ENCODE measurements at regions of chr5 and their contacts with region 1.

Region 1: DNA sequence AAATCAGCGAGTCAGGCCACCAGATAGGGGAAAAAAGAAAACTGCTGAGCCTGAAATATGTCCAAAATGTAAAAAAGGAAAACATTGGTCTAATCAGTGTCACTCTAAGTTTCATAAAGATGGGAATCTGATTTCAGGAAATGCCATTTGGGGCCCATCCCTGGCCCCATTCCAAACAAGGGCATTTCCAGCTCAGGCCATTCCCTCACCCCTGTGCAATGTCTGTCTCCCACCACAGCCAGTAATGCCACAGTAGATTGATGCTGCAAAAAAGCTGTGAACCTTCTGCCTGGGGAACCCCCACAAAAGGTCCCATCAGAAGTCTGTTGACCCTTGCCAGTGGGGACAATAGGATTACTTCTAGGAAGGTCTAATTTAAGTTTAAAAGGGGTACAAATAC is 199.6 kb downstream of the YTHDC2 start:
- DNase-seq: no peak
- H3K4me3 ChIP-seq: no peak overlapping the region
- H3K27ac ChIP-seq: no peak overlapping the region
- H3K4me1 ChIP-seq: no peaks in the 10 kb centered on the region
- H3K27me3 ChIP-seq: no peaks in the 10 kb centered on the region
- CTCF ChIP-seq: no peak
- POLR2A ChIP-seq: no peak

Region 2: DNA sequence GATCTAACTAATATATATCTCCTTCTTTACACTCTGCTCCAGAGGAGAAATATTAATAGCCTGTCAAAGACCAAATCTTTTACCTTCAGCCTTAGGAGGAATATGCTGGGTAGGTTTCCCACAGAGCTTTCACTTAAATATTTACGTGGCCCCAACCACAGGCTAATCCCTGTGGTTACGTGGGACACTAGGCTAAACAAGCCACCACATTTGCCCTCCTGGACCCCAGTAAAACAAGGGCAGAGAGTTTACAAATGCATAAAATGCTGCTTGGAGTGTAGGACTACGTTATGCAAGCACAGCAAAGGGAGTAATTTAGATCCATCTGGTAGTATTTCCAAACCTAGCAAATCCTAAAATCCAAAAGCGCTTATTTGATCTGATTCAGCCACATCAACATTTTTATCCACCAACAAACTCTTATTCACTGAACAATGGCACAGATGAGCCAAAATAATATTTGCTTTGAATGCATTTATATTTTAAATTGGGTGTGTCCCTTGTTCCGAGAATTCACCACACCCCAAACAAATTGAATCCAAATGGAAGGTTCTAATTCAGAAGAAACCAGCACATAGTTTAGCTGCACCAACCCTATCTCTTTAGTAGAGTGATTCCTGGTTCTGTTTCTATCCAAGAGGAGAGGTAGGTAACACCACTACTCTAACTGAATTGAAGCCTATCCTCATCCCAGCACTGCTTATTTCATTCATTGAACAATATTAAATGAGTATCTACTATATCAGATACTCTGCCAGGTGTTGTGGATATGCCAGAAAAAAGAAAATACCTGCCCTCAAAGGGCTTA is 457.3 kb before region 1 on chr5:
- intact Hi-C with region 1: loop called (anchors 5 kb)
- DNase-seq: no peak
- H3K4me3 ChIP-seq: no peak overlapping the region
- H3K27ac ChIP-seq: peak overlapping the region; percentile 64
- H3K4me1 ChIP-seq: peaks cover 34% of the 10 kb centered on the region
- H3K27me3 ChIP-seq: no peaks in the 10 kb centered on the region
- CTCF ChIP-seq: no peak
- POLR2A ChIP-seq: no peak

Region 3: DNA sequence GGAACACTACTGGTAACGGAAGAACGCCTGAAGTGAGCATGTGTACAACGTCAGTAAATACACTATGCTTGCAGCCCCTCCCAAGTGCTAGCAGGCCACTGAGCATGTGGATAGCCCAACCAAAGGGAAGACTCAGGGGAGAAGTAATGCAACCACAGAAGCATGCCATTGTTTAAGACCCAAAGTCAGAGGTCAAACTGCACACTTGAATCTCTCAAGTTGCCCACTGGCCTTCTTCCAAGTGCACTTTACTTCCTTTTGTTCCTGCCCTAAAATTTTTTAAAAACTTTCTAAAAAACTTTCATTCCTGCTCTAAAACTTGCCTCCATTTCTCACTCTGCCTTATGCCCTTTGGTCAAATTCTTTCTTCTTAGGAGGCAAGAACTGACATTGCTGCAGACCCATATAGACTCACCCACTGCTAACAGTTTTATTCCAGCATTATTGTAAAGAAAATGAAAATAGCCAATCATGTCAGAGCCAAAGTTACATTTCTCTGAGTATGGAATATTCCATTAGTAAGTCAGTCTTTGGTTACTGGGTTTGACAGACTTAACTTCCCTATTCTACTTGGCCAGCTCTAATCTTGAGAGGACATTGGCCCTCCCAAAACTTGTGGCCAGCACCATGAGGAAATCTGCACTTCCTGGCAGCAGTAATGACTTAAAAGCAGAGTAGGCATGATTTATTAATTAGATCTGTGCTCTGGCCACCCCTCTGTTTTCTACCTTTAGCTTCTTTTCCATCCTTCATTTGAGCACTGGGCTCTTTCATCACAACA is 355.2 kb before region 1 on chr5:
- intact Hi-C with region 1: no loop called
- DNase-seq: no peak
- H3K4me3 ChIP-seq: no peak overlapping the region
- H3K27ac ChIP-seq: no peak overlapping the region
- H3K4me1 ChIP-seq: no peaks in the 10 kb centered on the region
- H3K27me3 ChIP-seq: no peaks in the 10 kb centered on the region
- CTCF ChIP-seq: no peak
- POLR2A ChIP-seq: no peak

Region 4: GRCh38 chr5:113663880-113664541 is 49.0 kb before region 1 on chr5:
- intact Hi-C with region 1: no loop called
- DNase-seq: no peak
- H3K4me3 ChIP-seq: no peak overlapping the region
- H3K27ac ChIP-seq: no peak overlapping the region
- H3K4me1 ChIP-seq: no peaks in the 10 kb centered on the region
- H3K27me3 ChIP-seq: no peaks in the 10 kb centered on the region
- CTCF ChIP-seq: no peak
- POLR2A ChIP-seq: no peak

Region 5: GRCh38 chr5:113678924-113679575 is 34.0 kb before region 1 on chr5:
- intact Hi-C with region 1: no loop called
- DNase-seq: no peak
- H3K4me3 ChIP-seq: no peak overlapping the region
- H3K27ac ChIP-seq: no peak overlapping the region
- H3K4me1 ChIP-seq: no peaks in the 10 kb centered on the region
- H3K27me3 ChIP-seq: no peaks in the 10 kb centered on the region
- CTCF ChIP-seq: peak; percentile 28 to 75 (median 41)
- POLR2A ChIP-seq: no peak